ENCODE measurements at regions of chr6 and their contacts with region 1.

Region 1: GRCh38 chr6:127302728-127303660 is 36.3 kb downstream of the RNF146 start:
- DNase-seq: peak; percentile 55
- H3K4me3 Mint-ChIP-seq: no peak overlapping the region
- H3K27ac Mint-ChIP-seq: no peak overlapping the region
- H3K4me1 Mint-ChIP-seq: peaks cover 13% of the 10 kb centered on the region
- H3K27me3 Mint-ChIP-seq: no peaks in the 10 kb centered on the region
- CTCF ChIP-seq: peak; percentile 65

Region 2: GRCh38 chr6:127317388-127318128 is 14.6 kb after region 1 on chr6:
- CTCF ChIA-PET with region 1: interaction called, 19 read pairs
- POLR2A ChIA-PET with region 1: interaction called, 3 read pairs
- intact Hi-C with region 1: no loop called
- DNase-seq: no peak
- H3K4me3 Mint-ChIP-seq: no peak overlapping the region
- H3K27ac Mint-ChIP-seq: no peak overlapping the region
- H3K4me1 Mint-ChIP-seq: peaks cover 5% of the 10 kb centered on the region
- H3K27me3 Mint-ChIP-seq: no peaks in the 10 kb centered on the region
- CTCF ChIP-seq: no peak

Region 3: GRCh38 chr6:127420556-127420955 is 117.6 kb after region 1 on chr6:
- CTCF ChIA-PET with region 1: interaction called, 36 read pairs
- POLR2A ChIA-PET with region 1: interaction called, 4 read pairs
- intact Hi-C with region 1: loop called (anchors 1 kb)
- DNase-seq: peak; percentile 91
- H3K4me3 Mint-ChIP-seq: no peak overlapping the region
- H3K27ac Mint-ChIP-seq: peak overlapping the region; percentile 55
- H3K4me1 Mint-ChIP-seq: peaks cover 14% of the 10 kb centered on the region
- H3K27me3 Mint-ChIP-seq: no peaks in the 10 kb centered on the region
- CTCF ChIP-seq: peak; percentile 46

Region 4: GRCh38 chr6:127539272-127539671 is 236.3 kb after region 1 on chr6:
- CTCF ChIA-PET with region 1: interaction called, 52 read pairs
- POLR2A ChIA-PET with region 1: no interaction called
- intact Hi-C with region 1: loop called (anchors 1 kb)
- DNase-seq: peak; percentile 14
- H3K4me3 Mint-ChIP-seq: no peak overlapping the region
- H3K27ac Mint-ChIP-seq: no peak overlapping the region
- H3K4me1 Mint-ChIP-seq: peaks cover 5% of the 10 kb centered on the region
- H3K27me3 Mint-ChIP-seq: peaks cover 36% of the 10 kb centered on the region
- CTCF ChIP-seq: peak; percentile 27

Measured in MCF 10A (cell line).